HCT116 (cell line): ENCODE measurements at regions of chr16 and their contacts with region 1.

Region 1: GRCh38 chr16:22077700-22078313 is 14.5 kb upstream of the VWA3A start:
- DNase-seq: peak; percentile 39
- ATAC-seq: peak; percentile 89
- H3K4me3 ChIP-seq: no peak overlapping the region
- H3K27ac ChIP-seq: no peak overlapping the region
- H3K4me1 ChIP-seq: peaks cover 0 to 2% of the 10 kb centered on the region in 2 experiments; a peak in 2 of 4 replicates
- H3K27me3 ChIP-seq: no peaks in the 10 kb centered on the region
- CTCF ChIP-seq: peak; percentile 70 to 89 (median 86)
- POLR2A ChIP-seq: no peak
- RAD21 ChIP-seq: peak; percentile 93

Region 2: GRCh38 chr16:21982108-21982507 is 95.7 kb before region 1 on chr16:
- CTCF ChIA-PET with region 1: interaction called, 8 read pairs
- POLR2A ChIA-PET with region 1: no interaction called
- RAD21 ChIA-PET with region 1: no interaction called
- intact Hi-C with region 1: loop called (anchors 5 kb)
- DNase-seq: no peak
- ATAC-seq: peak; percentile 59; the same call in 1 of the 2 replicates
- H3K4me3 ChIP-seq: no peak overlapping the region
- H3K27ac ChIP-seq: no peak overlapping the region
- H3K4me1 ChIP-seq: peaks cover 0 to 5% of the 10 kb centered on the region in 2 experiments; a peak in 1 of 4 replicates
- H3K27me3 ChIP-seq: no peaks in the 10 kb centered on the region
- CTCF ChIP-seq: peak in 1 of 3 experiments; percentile 22; a peak in 1 of 6 replicates
- POLR2A ChIP-seq: no peak
- RAD21 ChIP-seq: no peak

Region 3: DNA sequence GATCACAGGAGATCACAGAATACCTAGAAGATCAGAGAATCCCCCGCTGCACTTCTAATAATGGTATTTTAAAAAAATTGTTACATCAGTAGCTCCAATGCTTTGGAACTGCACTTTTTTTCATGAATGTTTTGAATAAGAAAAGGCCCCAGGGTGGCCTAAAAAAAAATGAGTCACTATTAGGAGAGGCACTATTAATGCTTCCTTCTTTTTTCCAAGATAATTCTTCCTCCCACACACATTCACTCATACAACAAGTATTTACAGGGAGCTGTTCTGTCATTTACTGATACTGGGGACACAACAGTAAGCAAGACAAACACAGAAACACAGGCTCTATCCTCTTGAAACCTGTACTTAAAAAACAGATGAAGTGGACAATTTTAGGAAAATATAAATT is 76.2 kb before region 1 on chr16:
- CTCF ChIA-PET with region 1: interaction called, 140 read pairs
- POLR2A ChIA-PET with region 1: interaction called, 4 read pairs
- RAD21 ChIA-PET with region 1: interaction called, 11 to 18 read pairs
- intact Hi-C with region 1: loop called (anchors 2 kb)
- DNase-seq: no peak
- ATAC-seq: peak; percentile 11; the same call in 1 of the 2 replicates
- H3K4me3 ChIP-seq: peak overlapping the region in 1 of 2 experiments; percentile 34; a peak in 1 of 4 replicates
- H3K27ac ChIP-seq: no peak overlapping the region
- H3K4me1 ChIP-seq: peaks cover 16 to 29% of the 10 kb centered on the region in 2 experiments
- H3K27me3 ChIP-seq: no peaks in the 10 kb centered on the region
- CTCF ChIP-seq: no peak
- POLR2A ChIP-seq: no peak
- RAD21 ChIP-seq: no peak

Region 4: GRCh38 chr16:22018559-22018958 is 59.2 kb before region 1 on chr16:
- CTCF ChIA-PET with region 1: interaction called, 14 read pairs
- POLR2A ChIA-PET with region 1: interaction called, 3 read pairs
- RAD21 ChIA-PET with region 1: no interaction called
- intact Hi-C with region 1: no loop called
- DNase-seq: no peak
- ATAC-seq: no peak
- H3K4me3 ChIP-seq: no peak overlapping the region
- H3K27ac ChIP-seq: no peak overlapping the region
- H3K4me1 ChIP-seq: peaks cover 63 to 86% of the 10 kb centered on the region in 2 experiments
- H3K27me3 ChIP-seq: no peaks in the 10 kb centered on the region
- CTCF ChIP-seq: no peak
- POLR2A ChIP-seq: no peak
- RAD21 ChIP-seq: no peak

Region 5: DNA sequence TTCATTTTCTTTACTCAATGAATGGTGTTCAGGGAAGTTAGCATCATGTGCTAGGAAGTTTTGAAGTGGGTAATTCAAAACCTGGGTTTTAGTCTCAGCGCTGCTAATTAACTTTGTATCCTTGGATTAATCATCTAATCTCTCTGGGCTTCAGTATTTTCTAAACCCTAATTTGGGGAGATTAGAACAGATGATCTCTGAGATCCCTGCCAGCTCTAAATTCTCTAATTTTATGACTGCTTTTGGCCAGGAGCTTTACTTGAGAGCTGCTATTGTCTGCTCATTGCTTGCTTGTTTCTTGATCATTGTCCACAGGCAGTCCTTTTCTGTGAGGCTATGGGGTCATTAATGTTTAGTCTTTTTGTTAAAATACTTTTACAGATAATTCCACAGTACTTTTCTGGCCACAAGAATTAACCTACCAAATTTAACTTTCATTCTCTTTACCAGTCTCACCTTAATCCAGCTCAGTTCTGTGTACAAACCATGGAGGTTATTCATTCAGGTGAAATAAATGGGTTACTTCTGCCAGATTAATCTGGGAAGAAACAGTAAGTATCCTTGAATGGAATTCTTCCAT is 13.8 kb before region 1 on chr16:
- CTCF ChIA-PET with region 1: interaction called, 20 read pairs
- POLR2A ChIA-PET with region 1: no interaction called
- RAD21 ChIA-PET with region 1: no interaction called
- intact Hi-C with region 1: no loop called
- DNase-seq: no peak
- ATAC-seq: no peak
- H3K4me3 ChIP-seq: no peak overlapping the region
- H3K27ac ChIP-seq: no peak overlapping the region
- H3K4me1 ChIP-seq: peaks cover 0 to 5% of the 10 kb centered on the region in 2 experiments; a peak in 1 of 4 replicates
- H3K27me3 ChIP-seq: no peaks in the 10 kb centered on the region
- CTCF ChIP-seq: no peak
- POLR2A ChIP-seq: no peak
- RAD21 ChIP-seq: no peak

Region 6: GRCh38 chr16:22098405-22099255 is 20.8 kb after region 1 on chr16:
- CTCF ChIA-PET with region 1: interaction called, 32 read pairs
- POLR2A ChIA-PET with region 1: no interaction called
- RAD21 ChIA-PET with region 1: interaction called, 4 to 5 read pairs
- intact Hi-C with region 1: no loop called
- DNase-seq: peak; percentile 56
- ATAC-seq: peak; percentile 99
- H3K4me3 ChIP-seq: no peak overlapping the region
- H3K27ac ChIP-seq: no peak overlapping the region
- H3K4me1 ChIP-seq: peaks cover 0 to 11% of the 10 kb centered on the region in 2 experiments; a peak in 2 of 4 replicates
- H3K27me3 ChIP-seq: no peaks in the 10 kb centered on the region
- CTCF ChIP-seq: peak; percentile 66 to 78 (median 76); a peak in 5 of 6 replicates
- POLR2A ChIP-seq: no peak
- RAD21 ChIP-seq: peak; percentile 82

Region 7: GRCh38 chr16:22132766-22133165 is 55.0 kb after region 1 on chr16:
- CTCF ChIA-PET with region 1: no interaction called
- POLR2A ChIA-PET with region 1: no interaction called
- RAD21 ChIA-PET with region 1: no interaction called
- intact Hi-C with region 1: no loop called
- DNase-seq: no peak
- ATAC-seq: no peak
- H3K4me3 ChIP-seq: no peak overlapping the region
- H3K27ac ChIP-seq: no peak overlapping the region
- H3K4me1 ChIP-seq: no peaks in the 10 kb centered on the region
- H3K27me3 ChIP-seq: peaks cover 9% of the 10 kb centered on the region; the same call in 1 of the 2 replicates
- CTCF ChIP-seq: no peak
- POLR2A ChIP-seq: no peak
- RAD21 ChIP-seq: no peak

Region 8: GRCh38 chr16:22190081-22190775 is 112.4 kb after region 1 on chr16:
- CTCF ChIA-PET with region 1: interaction called, 29 read pairs
- POLR2A ChIA-PET with region 1: no interaction called
- RAD21 ChIA-PET with region 1: interaction called, 6 read pairs
- intact Hi-C with region 1: loop called (anchors 5 kb)
- DNase-seq: no peak
- ATAC-seq: peak; percentile 75
- H3K4me3 ChIP-seq: peak overlapping the region; percentile 51 to 67
- H3K27ac ChIP-seq: peak overlapping the region; percentile 67
- H3K4me1 ChIP-seq: peaks cover 20 to 32% of the 10 kb centered on the region in 2 experiments
- H3K27me3 ChIP-seq: no peaks in the 10 kb centered on the region
- CTCF ChIP-seq: no peak
- POLR2A ChIP-seq: no peak
- RAD21 ChIP-seq: no peak

Region 9: GRCh38 chr16:22424161-22424937 is 346.5 kb after region 1 on chr16:
- CTCF ChIA-PET with region 1: no interaction called
- POLR2A ChIA-PET with region 1: no interaction called
- RAD21 ChIA-PET with region 1: no interaction called
- intact Hi-C with region 1: no loop called
- DNase-seq: no peak
- ATAC-seq: no peak
- H3K4me3 ChIP-seq: no peak overlapping the region
- H3K27ac ChIP-seq: no peak overlapping the region
- H3K4me1 ChIP-seq: no peaks in the 10 kb centered on the region
- H3K27me3 ChIP-seq: no peaks in the 10 kb centered on the region
- CTCF ChIP-seq: no peak
- POLR2A ChIP-seq: no peak
- RAD21 ChIP-seq: no peak